Activated T-helper 1 cell treated with anti-CD3 and anti-CD28 coated beads, Interleukin-12 subunit alpha, Interleukin-12 subunit beta, Interleukin-2, Interleukin-4 antibody, amounts not matched to agents 30 ng/mL and 10 ng/mL and 1 ng/mL, durations not matched to agents 14 hours and 24 hours and 36 hours (primary cell): ENCODE measurements at regions of chrX and their contacts with region 1.

Region 1: DNA sequence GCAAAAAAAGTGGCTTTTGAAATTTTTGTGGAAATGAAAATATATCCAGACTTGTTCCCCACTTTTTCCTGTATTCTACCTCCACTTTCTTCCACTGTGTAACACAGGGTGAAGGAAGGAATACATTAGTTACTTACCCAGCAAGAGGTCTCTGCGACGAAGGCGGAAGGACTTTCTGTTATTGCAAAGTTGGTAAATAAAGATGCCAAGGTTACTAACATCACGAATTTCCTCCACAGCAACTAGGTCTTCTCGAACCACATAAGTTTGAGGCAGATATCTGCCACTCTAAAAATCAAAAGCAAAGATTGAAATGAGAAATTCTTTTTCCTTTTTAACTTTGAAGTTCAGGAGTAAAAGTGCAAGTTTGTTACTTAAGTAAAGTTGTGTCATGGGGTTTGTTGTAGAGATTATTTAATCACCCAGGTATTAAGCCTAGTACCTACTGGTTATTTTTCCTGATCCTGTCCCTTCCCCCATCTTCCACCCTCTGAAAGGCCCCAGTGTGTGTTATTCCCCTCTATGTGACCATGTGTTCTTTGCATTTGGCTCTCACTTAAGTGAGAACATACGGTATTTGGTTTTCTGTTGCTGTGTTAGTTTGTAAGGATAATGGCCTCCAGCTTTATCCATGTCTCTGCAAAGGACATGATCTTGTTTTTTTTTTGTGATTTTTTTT is 5.8 kb downstream of the ITM2A start:
- DNase-seq: no peak
- H3K4me3 Mint-ChIP-seq: peak overlapping the region; percentile 68
- H3K27ac Mint-ChIP-seq: peak overlapping the region; percentile 71
- H3K4me1 Mint-ChIP-seq: peaks cover 34% of the 10 kb centered on the region
- H3K27me3 Mint-ChIP-seq: no peaks in the 10 kb centered on the region

Region 2: GRCh38 chrX:79325263-79325958 is 35.9 kb before region 1 on chrX:
- intact Hi-C with region 1: loop called (anchors 5 kb)
- DNase-seq: peak; percentile 24
- H3K4me3 Mint-ChIP-seq: peak overlapping the region; percentile 73
- H3K27ac Mint-ChIP-seq: peak overlapping the region; percentile 67
- H3K4me1 Mint-ChIP-seq: peaks cover 10% of the 10 kb centered on the region
- H3K27me3 Mint-ChIP-seq: no peaks in the 10 kb centered on the region

Region 3: GRCh38 chrX:80022363-80023031 is 661.2 kb after region 1 on chrX:
- intact Hi-C with region 1: no loop called
- DNase-seq: no peak
- H3K4me3 Mint-ChIP-seq: no peak overlapping the region
- H3K27ac Mint-ChIP-seq: no peak overlapping the region
- H3K4me1 Mint-ChIP-seq: no peaks in the 10 kb centered on the region
- H3K27me3 Mint-ChIP-seq: peaks cover 4% of the 10 kb centered on the region